ENCODE measurements at regions of chr19 and their contacts with region 1.

Region 1: DNA sequence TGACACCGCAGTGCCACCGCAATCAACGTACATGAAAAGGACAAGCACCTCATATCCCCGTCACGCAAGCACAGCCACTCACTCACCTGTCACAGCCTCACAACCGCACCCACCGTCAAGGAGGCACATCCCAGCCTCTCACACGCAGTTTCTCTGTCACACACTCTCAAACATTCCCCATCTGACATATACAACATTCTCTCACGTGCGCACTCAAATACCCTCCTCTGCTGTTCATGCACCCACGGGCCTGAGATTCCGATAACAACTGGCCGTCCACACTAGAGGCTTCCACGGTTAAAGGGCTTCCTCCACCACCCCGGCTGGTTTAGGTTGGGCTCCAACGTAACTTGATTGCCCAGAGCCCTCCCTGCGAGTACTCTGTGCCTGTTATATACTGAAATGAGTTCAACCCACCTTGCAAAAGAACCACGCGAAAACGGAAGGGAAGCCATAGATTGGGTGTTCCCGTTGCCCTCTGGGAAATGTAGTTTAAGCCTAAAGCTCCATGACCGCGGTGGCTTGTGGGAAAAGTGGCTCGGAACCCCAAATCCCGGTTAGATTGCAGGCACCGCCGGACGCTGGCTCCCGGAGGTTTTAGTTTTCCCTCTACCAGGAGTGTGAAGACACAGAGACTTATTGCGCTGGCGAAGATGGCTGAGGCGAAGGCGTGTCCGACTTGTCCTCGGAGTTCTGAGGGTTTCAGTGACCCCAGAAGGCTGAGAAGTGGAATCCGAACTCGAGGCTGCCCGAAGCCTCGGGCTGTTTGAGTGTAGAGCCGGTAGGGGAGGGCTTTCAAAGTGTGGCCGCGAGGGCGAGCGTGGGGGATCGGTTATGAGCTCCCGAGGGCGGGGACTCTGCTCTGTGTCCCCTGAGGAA is at the start of gene ZNF573:
- DNase-seq: peak; percentile 66 to 99 (median 82)
- ATAC-seq: peak; percentile 84
- H3K4me3 ChIP-seq: peak within 1 kb of the TSS; percentile 67 to 70
- H3K4me3 Mint-ChIP-seq: peak within 1 kb of the TSS; percentile 97
- H3K27ac ChIP-seq: peak within 1 kb of the TSS; percentile 96 to 98
- H3K27ac Mint-ChIP-seq: peak within 1 kb of the TSS; percentile 91
- H3K4me1 ChIP-seq: peaks cover 12% of the 10 kb centered on the region
- H3K4me1 Mint-ChIP-seq: peaks cover 46% of the 10 kb centered on the region
- H3K27me3 ChIP-seq: no peaks in the 10 kb centered on the region
- H3K27me3 Mint-ChIP-seq: no peaks in the 10 kb centered on the region
- CTCF ChIP-seq: no peak
- total RNA-seq, gene ZNF573: 3.9 to 5.8 TPM

Region 2: DNA sequence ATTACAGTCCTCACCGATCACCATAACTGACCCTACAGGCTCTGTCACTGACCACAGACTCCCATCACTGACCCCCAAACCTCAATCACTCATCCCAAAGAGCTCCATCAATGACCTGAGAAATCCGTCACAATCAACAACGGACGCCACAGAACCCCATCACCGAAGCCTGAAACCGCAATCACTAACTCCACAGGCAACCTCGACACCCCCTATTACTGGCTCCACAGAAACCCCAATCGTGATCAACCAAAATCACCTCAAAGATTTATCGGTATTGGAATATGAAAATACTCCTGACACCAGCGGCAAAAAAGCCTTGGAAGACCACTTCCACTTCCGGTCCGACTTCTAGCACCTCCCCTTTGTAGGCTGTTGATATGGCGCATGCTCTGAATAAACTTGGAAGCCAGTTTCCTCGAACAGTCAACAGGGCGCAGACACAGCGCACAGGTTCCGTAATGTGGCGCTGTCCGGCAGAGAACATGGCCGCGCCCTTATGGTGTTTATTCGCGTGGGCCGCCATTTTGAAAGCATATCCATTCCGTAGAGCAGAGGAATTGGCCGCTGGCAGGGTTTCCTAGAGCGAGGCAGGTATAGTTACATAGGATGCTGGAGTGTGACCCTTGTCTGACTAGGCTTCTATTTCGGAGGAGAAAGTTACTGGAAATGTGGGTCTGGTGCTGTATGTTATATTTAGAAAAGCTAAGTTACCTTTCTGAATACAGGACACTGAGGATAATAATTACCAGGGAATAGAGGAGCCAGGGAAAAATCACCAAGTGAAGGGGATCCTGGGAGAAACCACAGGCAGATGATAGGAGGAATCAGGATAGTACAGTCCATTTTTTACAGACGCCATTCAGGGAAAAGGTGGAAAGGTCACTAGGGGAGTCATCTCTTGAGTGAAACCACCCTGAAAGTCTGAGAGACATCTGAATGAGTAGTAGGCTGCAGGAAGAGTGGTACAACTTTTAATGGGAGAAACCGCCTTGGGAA is 606.7 kb before region 1 on chr19 and contains the start of gene ZNF585A:
- CTCF ChIA-PET with region 1: no interaction called
- POLR2A ChIA-PET with region 1: no interaction called
- intact Hi-C with region 1: loop called in 1 of 2 experiments (anchors 1 kb)
- DNase-seq: peak; percentile 83 to 98 (median 90)
- ATAC-seq: peak; percentile 99
- H3K4me3 ChIP-seq: peak within 1 kb of the TSS; percentile 85 to 91
- H3K4me3 Mint-ChIP-seq: no peak within 1 kb of the TSS
- H3K27ac ChIP-seq: peak within 1 kb of the TSS; percentile 74 to 89
- H3K27ac Mint-ChIP-seq: no peak within 1 kb of the TSS
- H3K4me1 ChIP-seq: no peaks in the 10 kb centered on the region
- H3K4me1 Mint-ChIP-seq: peaks cover 6% of the 10 kb centered on the region
- H3K27me3 ChIP-seq: no peaks in the 10 kb centered on the region
- H3K27me3 Mint-ChIP-seq: no peaks in the 10 kb centered on the region
- CTCF ChIP-seq: no peak
- total RNA-seq, gene ZNF585A: 5.3 TPM

Region 3: GRCh38 chr19:37370880-37371661 is 408.3 kb before region 1 on chr19 and contains the start of gene ZNF527:
- CTCF ChIA-PET with region 1: no interaction called
- POLR2A ChIA-PET with region 1: interaction called, 7 read pairs
- intact Hi-C with region 1: loop called (anchors 1 kb)
- DNase-seq: peak; percentile 94 to 98 (median 97)
- ATAC-seq: peak; percentile 92
- H3K4me3 ChIP-seq: peak within 1 kb of the TSS; percentile 80 to 95
- H3K4me3 Mint-ChIP-seq: peak within 1 kb of the TSS; percentile 99
- H3K27ac ChIP-seq: peak within 1 kb of the TSS; percentile 82 to 90
- H3K27ac Mint-ChIP-seq: peak within 1 kb of the TSS; percentile 96
- H3K4me1 ChIP-seq: peaks cover 7% of the 10 kb centered on the region
- H3K4me1 Mint-ChIP-seq: peaks cover 20% of the 10 kb centered on the region
- H3K27me3 ChIP-seq: no peaks in the 10 kb centered on the region
- H3K27me3 Mint-ChIP-seq: no peaks in the 10 kb centered on the region
- CTCF ChIP-seq: no peak
- total RNA-seq, gene ZNF527: 12.9 to 14.2 TPM

Region 4: DNA sequence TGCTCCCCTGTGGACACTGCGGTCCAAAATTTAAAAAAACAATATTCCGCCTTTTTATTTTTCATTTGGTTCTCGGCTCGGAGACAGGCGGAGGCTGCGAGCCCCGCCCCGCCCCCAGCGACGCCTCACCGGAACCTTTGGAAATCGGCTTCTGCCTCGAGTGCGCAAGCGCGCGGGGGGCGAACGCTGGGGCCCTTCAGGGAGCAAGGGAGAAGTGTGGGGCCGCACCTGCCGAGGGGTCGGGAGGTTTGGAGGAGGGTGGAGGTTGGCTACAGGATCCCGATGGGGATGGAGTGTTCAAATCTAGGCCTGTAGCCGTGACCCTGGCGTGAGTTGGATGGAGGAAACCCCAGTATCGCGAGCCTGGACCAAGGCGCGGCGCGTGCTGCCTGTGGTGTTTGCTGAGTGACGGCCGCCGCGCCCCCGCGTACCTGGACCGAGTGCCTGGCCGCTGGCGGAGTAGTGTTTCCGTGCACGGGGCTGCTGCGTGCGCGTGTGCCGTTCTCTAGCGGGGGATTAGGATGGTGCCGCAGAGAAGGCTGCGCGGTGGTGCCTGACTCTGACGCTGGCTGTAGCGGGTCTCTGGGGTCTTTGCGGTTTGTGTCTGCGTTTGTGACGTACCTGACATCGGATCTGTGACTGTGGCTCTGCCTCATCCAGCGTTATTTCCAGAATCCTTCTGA is 123.5 kb before region 1 on chr19:
- CTCF ChIA-PET with region 1: no interaction called
- POLR2A ChIA-PET with region 1: interaction called, 3 read pairs
- intact Hi-C with region 1: loop called (anchors 1 to 2 kb)
- DNase-seq: peak; percentile 60 to 90 (median 86)
- ATAC-seq: peak; percentile 76
- H3K4me3 ChIP-seq: peak overlapping the region; percentile 74 to 81
- H3K4me3 Mint-ChIP-seq: peak overlapping the region; percentile 95
- H3K27ac ChIP-seq: peak overlapping the region; percentile 85 to 92
- H3K27ac Mint-ChIP-seq: peak overlapping the region; percentile 96
- H3K4me1 ChIP-seq: peaks cover 12% of the 10 kb centered on the region
- H3K4me1 Mint-ChIP-seq: peaks cover 38% of the 10 kb centered on the region
- H3K27me3 ChIP-seq: no peaks in the 10 kb centered on the region
- H3K27me3 Mint-ChIP-seq: no peaks in the 10 kb centered on the region
- CTCF ChIP-seq: no peak

Region 5: GRCh38 chr19:37719111-37719926 is 60.0 kb before region 1 on chr19 and contains the start of gene ZNF607:
- CTCF ChIA-PET with region 1: no interaction called
- POLR2A ChIA-PET with region 1: interaction called, 3 read pairs
- intact Hi-C with region 1: loop called (anchors 1 to 2 kb)
- DNase-seq: peak; percentile 61 to 92 (median 81)
- ATAC-seq: peak; percentile 82
- H3K4me3 ChIP-seq: peak within 1 kb of the TSS; percentile 67 to 89
- H3K4me3 Mint-ChIP-seq: peak within 1 kb of the TSS; percentile 96
- H3K27ac ChIP-seq: peak within 1 kb of the TSS; percentile 73 to 79
- H3K27ac Mint-ChIP-seq: peak within 1 kb of the TSS; percentile 98
- H3K4me1 ChIP-seq: peaks cover 11% of the 10 kb centered on the region
- H3K4me1 Mint-ChIP-seq: peaks cover 22% of the 10 kb centered on the region
- H3K27me3 ChIP-seq: no peaks in the 10 kb centered on the region
- H3K27me3 Mint-ChIP-seq: no peaks in the 10 kb centered on the region
- CTCF ChIP-seq: no peak
- total RNA-seq, gene ZNF607: 2.9 to 3.3 TPM

Region 6: GRCh38 chr19:38004521-38005223 is 225.3 kb after region 1 on chr19:
- CTCF ChIA-PET with region 1: no interaction called
- POLR2A ChIA-PET with region 1: no interaction called
- intact Hi-C with region 1: no loop called
- DNase-seq: peak in 1 of 9 experiments; percentile 23
- ATAC-seq: no peak
- H3K4me3 ChIP-seq: no peak overlapping the region
- H3K4me3 Mint-ChIP-seq: no peak overlapping the region
- H3K27ac ChIP-seq: no peak overlapping the region
- H3K27ac Mint-ChIP-seq: no peak overlapping the region
- H3K4me1 ChIP-seq: peaks cover 9% of the 10 kb centered on the region
- H3K4me1 Mint-ChIP-seq: peaks cover 12% of the 10 kb centered on the region
- H3K27me3 ChIP-seq: no peaks in the 10 kb centered on the region
- H3K27me3 Mint-ChIP-seq: no peaks in the 10 kb centered on the region
- CTCF ChIP-seq: no peak